Breast epithelium (tissue), 4 donors: ENCODE measurements at regions of chr10 and their contacts with region 1.

Region 1: DNA sequence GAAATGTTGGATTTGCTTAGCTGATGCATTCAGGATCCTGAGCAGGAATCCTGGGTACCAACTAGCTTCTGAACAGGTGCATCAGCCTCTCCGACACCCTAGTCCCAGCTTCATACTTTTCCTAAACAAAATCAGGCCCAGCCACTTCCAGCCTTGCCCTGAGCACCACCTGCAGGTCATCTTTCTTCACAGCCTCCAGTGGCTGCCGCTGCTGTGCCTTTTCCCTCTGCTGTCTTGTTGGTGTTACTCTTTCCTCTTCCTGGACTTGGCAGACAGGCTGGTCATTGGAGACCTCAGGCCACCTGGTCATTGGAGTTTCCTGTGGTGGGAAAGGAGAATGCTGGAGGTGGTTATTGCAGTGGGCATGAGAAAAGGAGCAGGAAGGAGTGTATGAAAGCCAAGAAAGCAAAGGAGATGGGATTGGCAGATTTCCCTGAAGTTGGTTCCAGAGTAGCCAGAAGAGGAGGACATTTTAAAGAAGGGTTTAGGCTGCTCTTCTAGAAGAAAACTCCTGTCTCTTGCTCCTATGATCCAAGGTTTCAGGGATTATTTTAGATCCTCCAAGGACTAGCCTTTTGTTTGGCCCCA is 48.2 kb upstream of the NFKB2 start:
- DNase-seq: peak; percentile 29 to 56
- H3K4me3 ChIP-seq: no peak overlapping the region
- H3K27ac ChIP-seq: no peak overlapping the region
- H3K4me1 ChIP-seq: no peaks in the 10 kb centered on the region
- H3K27me3 ChIP-seq: no peaks in the 10 kb centered on the region
- CTCF ChIP-seq: peak in 2 of 3 donors; percentile 50 to 57
- POLR2A ChIP-seq: no peak

Region 2: DNA sequence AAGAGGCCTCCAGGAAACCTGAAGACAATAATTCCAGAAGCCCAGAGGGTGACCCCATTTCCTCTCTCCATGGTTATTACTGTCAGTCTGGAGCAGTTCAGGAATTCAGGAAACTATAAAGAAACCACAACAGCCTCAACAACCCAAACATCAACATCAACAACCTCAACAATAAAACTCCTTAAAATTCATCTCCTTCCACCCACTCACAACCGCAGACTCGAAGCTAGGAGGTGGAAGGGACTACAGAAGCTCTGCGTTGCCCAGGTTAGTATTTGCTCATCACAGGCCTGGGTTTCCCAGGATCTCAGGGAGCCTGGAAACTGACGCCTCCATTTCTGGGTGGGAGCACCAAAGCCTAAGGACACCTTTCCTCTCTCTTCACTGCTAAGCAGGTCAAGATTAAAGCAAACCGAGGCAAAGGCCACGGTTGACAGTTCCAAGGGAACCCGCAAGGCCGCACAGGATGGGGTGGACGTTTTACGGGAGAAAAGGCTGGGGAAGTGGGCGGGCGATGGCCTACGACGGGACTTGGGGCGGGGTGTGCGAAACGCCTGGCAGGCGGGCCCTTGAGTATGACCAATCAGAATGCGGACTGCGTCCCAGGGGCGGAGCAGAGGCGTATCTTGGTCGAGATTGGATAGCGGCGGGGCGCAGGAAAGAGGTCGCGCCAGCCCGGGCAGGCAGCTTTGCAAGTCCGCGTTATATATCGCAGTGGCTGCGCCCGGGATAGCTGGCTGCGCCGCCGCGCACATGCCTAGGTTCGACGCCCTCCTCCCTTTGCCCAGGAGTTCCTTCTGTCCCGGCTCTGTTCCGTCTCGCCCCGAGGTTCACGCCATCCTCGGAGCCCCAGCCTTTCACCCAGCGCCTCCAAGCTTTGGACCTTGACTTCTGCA is 121.4 kb before region 1 on chr10 and contains the start of gene ELOVL3:
- intact Hi-C with region 1: loop called (anchors 10 kb)
- DNase-seq: peak; percentile 88 to 90
- H3K4me3 ChIP-seq: peak within 1 kb of the TSS; percentile 25 to 62 (median 40)
- H3K27ac ChIP-seq: peak within 1 kb of the TSS; percentile 75 to 83
- H3K4me1 ChIP-seq: peaks cover 0 to 10% of the 10 kb centered on the region in 2 donors
- H3K27me3 ChIP-seq: peaks cover 0 to 18% of the 10 kb centered on the region in 2 donors
- CTCF ChIP-seq: peak in 1 of 3 donors; percentile 11
- POLR2A ChIP-seq: no peak
- total RNA-seq, gene ELOVL3: 0.66 to 2.2 (median 0.88) TPM